ENCODE measurements at regions of chrX and their contacts with region 1.

Region 1: DNA sequence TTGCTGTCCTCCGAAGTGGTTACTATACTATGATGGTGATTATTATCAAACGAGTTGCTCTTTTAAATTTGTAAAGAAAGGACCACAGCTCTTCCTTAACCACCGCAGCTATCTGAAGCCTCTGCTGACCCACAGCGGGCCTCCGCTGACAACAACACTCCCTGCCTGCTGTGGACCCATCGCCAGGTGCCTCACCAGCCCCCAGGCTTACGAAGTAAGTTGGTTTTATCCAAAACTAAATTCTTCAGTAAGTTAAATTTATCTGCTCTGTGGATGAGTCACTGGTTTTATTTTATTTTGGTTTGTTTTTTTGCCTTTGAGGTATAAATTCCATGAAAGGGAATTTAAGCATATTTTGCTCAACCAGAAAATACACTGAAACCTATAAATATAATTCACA is 54.7 kb downstream of the SLC9A6 start:
- DNase-seq: no peak
- ATAC-seq: no peak
- H3K4me3 ChIP-seq: no peak overlapping the region
- H3K27ac ChIP-seq: no peak overlapping the region
- H3K4me1 ChIP-seq: no peaks in the 10 kb centered on the region
- H3K27me3 ChIP-seq: no peaks in the 10 kb centered on the region
- CTCF ChIP-seq: no peak
- EP300 ChIP-seq: no peak
- POLR2A ChIP-seq: no peak
- RAD21 ChIP-seq: no peak

Region 2: GRCh38 chrX:136028251-136028984 is 11.6 kb before region 1 on chrX:
- CTCF ChIA-PET with region 1: interaction called, 36 read pairs
- POLR2A ChIA-PET with region 1: no interaction called
- RAD21 ChIA-PET with region 1: no interaction called
- SMC1A ChIA-PET with region 1: interaction called, 8 read pairs
- in situ Hi-C with region 1: no loop called
- intact Hi-C with region 1: no loop called
- DNase-seq: no peak
- ATAC-seq: peak; percentile 81
- H3K4me3 ChIP-seq: no peak overlapping the region
- H3K27ac ChIP-seq: no peak overlapping the region
- H3K4me1 ChIP-seq: no peaks in the 10 kb centered on the region
- H3K27me3 ChIP-seq: no peaks in the 10 kb centered on the region
- CTCF ChIP-seq: peak; percentile 44 to 64 (median 62); a peak in 5 of 6 replicates
- EP300 ChIP-seq: no peak
- POLR2A ChIP-seq: no peak
- RAD21 ChIP-seq: peak; percentile 82

Region 3: GRCh38 chrX:136097871-136098805 is 58.2 kb after region 1 on chrX:
- CTCF ChIA-PET with region 1: no interaction called
- POLR2A ChIA-PET with region 1: no interaction called
- RAD21 ChIA-PET with region 1: no interaction called
- SMC1A ChIA-PET with region 1: no interaction called
- in situ Hi-C with region 1: no loop called
- intact Hi-C with region 1: no loop called
- DNase-seq: no peak
- ATAC-seq: no peak
- H3K4me3 ChIP-seq: no peak overlapping the region
- H3K27ac ChIP-seq: no peak overlapping the region
- H3K4me1 ChIP-seq: no peaks in the 10 kb centered on the region
- H3K27me3 ChIP-seq: no peaks in the 10 kb centered on the region
- CTCF ChIP-seq: no peak
- EP300 ChIP-seq: no peak
- POLR2A ChIP-seq: no peak
- RAD21 ChIP-seq: no peak

Measured in GM12878 (cell line).